ENCODE measurements at regions of chr1 and their contacts with region 1.

Region 1: DNA sequence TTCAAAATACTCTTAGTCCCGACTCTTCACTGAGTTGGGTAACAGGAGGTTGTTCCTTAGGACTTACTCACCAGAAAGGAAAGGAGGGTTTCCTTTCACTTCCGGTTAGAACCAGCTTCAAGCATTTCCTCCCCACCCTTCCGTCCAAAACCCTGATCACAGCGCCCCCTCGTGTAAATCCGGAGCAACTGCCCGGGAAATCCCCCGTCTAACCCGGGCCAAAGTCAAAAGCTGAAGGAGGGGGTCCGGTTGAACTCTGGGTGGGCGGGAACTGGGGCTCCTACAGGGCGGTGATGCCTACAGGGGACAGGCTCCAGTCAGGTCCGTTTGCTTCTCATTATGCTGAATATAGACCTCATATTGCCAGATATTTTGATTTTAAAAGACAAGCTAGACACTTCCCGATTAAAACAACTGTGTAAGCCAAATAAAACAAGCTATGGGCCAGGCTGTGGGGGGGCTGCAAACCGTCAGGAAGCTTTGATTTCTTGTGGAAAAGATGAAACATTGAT is 15.0 kb upstream of the MTARC2 start:
- DNase-seq: peak; percentile 98
- H3K4me3 Mint-ChIP-seq: peak overlapping the region; percentile 19
- H3K27ac Mint-ChIP-seq: peak overlapping the region; percentile 44
- H3K4me1 Mint-ChIP-seq: peaks cover 32% of the 10 kb centered on the region
- H3K27me3 Mint-ChIP-seq: no peaks in the 10 kb centered on the region
- CTCF ChIP-seq: peak; percentile 99

Region 2: DNA sequence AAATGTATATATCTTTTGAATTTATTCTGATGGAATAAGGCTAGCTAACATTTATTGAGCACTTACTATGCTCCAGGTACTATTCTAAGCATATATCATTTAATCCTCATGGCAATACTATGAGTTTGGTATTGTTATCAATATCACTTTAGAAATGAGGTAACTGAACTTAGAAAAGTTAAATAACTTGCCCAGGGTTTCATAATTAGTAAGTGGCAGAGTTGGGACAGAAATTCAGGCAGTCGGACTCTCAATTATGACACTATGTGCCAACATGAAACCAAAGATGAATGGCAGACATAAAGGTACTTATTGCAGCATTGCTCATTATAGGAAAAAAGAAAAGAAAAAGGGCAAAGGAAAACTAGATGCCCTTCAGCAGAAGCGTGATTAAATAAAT is 509.1 kb before region 1 on chr1:
- CTCF ChIA-PET with region 1: interaction called, 41 read pairs
- POLR2A ChIA-PET with region 1: interaction called, 9 read pairs
- intact Hi-C with region 1: no loop called
- DNase-seq: no peak
- H3K4me3 Mint-ChIP-seq: no peak overlapping the region
- H3K27ac Mint-ChIP-seq: no peak overlapping the region
- H3K4me1 Mint-ChIP-seq: peaks cover 17% of the 10 kb centered on the region
- H3K27me3 Mint-ChIP-seq: no peaks in the 10 kb centered on the region
- CTCF ChIP-seq: no peak

Region 3: DNA sequence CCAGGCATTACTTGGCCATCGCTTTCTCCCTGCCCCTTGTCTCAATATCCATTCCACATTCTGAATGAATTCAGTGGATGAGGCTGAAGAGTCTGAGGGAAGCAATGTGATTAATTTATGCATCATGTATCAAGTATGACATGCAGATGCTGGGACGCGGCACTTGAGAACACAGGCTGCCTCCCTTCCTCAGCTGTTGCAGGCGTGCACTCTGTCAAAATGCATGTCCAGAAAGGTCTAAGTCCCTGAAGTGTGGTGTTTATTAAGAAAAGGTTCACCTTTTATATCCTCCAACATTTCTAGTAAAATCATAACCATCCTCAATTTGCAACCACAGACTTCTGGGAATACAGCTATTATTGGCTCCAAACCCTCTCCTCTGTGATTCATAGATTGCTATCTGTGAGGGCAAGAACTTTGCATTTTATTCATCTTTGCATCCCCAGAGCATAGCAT is 438.3 kb before region 1 on chr1:
- CTCF ChIA-PET with region 1: interaction called, 70 read pairs
- POLR2A ChIA-PET with region 1: interaction called, 16 read pairs
- intact Hi-C with region 1: loop called (anchors 1 kb)
- DNase-seq: no peak
- H3K4me3 Mint-ChIP-seq: no peak overlapping the region
- H3K27ac Mint-ChIP-seq: no peak overlapping the region
- H3K4me1 Mint-ChIP-seq: peaks cover 5% of the 10 kb centered on the region
- H3K27me3 Mint-ChIP-seq: no peaks in the 10 kb centered on the region
- CTCF ChIP-seq: no peak

Region 4: GRCh38 chr1:220690140-220691025 is 42.8 kb before region 1 on chr1 and contains the start of gene C1orf115:
- CTCF ChIA-PET with region 1: interaction called, 27 read pairs
- POLR2A ChIA-PET with region 1: no interaction called
- intact Hi-C with region 1: loop called (anchors 1 kb)
- DNase-seq: peak; percentile 81
- H3K4me3 Mint-ChIP-seq: peak within 1 kb of the TSS; percentile 83
- H3K27ac Mint-ChIP-seq: no peak within 1 kb of the TSS
- H3K4me1 Mint-ChIP-seq: peaks cover 7% of the 10 kb centered on the region
- H3K27me3 Mint-ChIP-seq: no peaks in the 10 kb centered on the region
- CTCF ChIP-seq: peak; percentile 100
- total RNA-seq, gene C1orf115: 1.6 TPM in 2 replicates

Region 5: DNA sequence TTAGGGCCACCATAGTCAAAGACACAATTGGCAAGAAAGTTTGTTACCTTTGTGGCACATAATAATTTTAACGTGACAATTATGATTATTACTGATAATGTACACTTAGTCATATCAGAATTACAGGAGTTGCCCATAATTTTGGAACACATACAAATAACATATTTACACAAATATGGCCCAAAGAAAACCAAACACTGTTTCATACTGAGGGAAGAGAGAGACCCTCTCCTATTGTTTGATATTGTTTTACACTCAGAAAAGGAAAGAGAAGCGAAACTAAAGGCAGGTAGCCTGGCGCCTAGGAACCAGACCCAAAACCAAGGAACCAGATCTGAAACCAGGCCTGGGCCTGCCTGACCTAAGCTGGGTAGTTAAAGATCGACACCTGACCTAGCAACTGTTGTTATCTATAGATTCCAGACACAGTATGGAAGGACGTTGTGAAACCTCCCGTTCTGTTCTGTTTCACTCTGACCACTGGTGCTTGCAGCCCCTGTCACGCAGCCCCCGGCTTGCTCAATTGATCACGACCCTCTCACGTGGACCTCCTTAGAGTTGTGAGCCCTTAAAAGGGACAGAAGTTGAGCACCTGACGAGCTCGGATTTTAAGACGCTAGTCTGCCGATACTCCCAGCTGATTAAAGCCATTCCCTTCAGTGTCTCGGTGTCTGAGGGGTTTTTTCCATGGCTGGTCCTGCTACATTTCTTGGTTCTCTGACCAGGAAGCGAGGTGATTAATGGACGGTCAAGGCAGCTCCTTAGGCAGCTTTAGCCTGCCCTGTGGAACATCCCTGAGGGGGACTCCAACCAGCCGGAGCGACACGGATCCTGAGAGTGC is 15.1 kb before region 1 on chr1:
- CTCF ChIA-PET with region 1: interaction called, 26 read pairs
- POLR2A ChIA-PET with region 1: interaction called, 3 read pairs
- intact Hi-C with region 1: no loop called
- DNase-seq: no peak
- H3K4me3 Mint-ChIP-seq: no peak overlapping the region
- H3K27ac Mint-ChIP-seq: no peak overlapping the region
- H3K4me1 Mint-ChIP-seq: no peaks in the 10 kb centered on the region
- H3K27me3 Mint-ChIP-seq: no peaks in the 10 kb centered on the region
- CTCF ChIP-seq: no peak

Region 6: DNA sequence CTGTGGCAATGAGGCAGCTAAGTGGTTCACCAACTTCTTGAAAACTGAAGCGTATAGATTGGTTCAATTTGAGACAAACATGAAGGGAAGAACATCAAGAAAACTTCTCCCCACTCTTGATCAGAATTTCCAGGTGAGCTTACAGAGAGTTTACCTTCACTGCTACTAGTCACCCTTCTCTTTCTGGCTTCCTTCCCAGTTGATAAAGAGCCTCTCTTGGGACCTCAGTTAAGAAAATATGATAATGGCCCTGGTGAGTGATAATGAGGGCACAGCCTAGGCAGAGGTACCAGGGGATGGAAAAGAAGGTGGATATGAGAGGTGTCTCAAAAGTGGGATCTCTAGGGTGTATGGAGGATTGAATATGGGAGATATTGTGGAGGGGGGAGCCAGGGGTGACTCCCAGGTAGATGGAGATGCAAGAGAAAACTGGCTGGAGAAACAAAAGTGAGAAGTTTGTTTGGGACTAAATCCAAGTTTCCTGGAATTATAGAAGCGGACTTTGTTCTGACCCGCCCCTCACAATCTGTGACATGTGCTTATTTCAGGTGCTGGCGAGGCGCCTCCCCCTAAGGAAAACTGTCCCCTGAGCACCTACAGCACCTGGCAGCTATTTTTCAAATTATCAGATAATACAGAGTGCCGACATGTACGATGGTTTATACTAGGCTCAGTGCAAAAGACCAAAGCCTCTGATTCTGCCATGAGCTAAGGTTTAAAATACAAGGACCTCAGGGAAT is 28.7 kb after region 1 on chr1:
- CTCF ChIA-PET with region 1: interaction called, 31 read pairs
- POLR2A ChIA-PET with region 1: no interaction called
- intact Hi-C with region 1: no loop called
- DNase-seq: no peak
- H3K4me3 Mint-ChIP-seq: no peak overlapping the region
- H3K27ac Mint-ChIP-seq: no peak overlapping the region
- H3K4me1 Mint-ChIP-seq: no peaks in the 10 kb centered on the region
- H3K27me3 Mint-ChIP-seq: peaks cover 6% of the 10 kb centered on the region
- CTCF ChIP-seq: no peak